Motor neuron (in vitro differentiated cells): ENCODE measurements at regions of chr15 and their contacts with region 1.

Region 1: DNA sequence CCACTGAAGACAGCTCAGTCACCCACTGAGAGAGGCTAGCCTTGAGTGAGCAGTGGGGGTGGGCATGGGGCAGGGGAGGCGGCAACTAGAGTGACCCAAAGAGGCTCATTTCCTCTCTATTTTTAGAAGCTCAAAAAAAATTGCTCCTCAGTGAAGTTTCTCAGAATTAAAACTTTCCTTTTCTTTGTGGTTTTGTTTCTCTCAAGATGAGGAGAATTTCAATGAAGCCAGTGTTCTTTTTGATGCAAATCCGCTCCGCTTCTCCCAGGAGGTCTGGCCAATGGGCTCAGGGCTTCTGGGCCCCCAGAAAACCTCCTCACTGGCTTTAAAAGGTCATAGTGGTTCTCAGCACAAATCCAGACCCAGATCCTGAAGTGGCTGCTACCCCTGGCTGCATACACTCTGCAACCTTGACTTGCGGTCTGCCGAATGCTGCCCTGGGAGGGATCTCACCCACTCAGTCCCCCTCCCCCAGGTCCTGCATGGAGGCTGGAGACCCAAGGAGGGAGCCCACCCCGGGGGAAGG is at the start of gene ACSBG1:
- ATAC-seq: peak in 5 of 8 experiments; percentile 55 to 64 (median 59)
- H3K4me3 ChIP-seq: no peak within 1 kb of the TSS
- H3K27ac ChIP-seq: no peak within 1 kb of the TSS
- H3K4me1 ChIP-seq: peaks cover 9 to 12% of the 10 kb centered on the region in 2 donors
- total RNA-seq, gene ACSBG1: 0.49 to 9.1 (median 1.9) TPM

Region 2: DNA sequence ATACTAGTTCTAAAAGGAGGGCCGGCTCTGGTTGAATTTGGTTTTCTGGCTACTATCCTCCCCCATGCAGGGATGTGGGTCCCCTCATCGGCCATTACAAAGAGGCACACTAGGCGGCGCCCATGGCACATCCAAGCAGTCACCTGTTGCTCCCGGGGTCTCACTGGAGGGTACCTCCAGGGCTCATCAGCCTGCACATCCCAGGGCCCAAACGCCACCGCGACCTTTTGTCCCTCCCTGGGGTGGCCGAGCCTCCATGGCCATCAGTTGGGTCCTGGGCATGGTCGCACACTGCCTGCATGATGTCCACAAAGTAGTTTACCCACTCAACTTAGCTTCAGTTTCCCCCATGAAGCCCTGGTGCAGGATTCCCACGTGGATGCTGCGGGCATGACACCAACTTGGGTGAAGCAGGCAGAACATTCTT is 57.1 kb before region 1 on chr15:
- in situ Hi-C with region 1: loop called in 1 of 9 experiments (anchors 10 kb)
- ATAC-seq: peak in 7 of 8 experiments; percentile 27 to 85 (median 55)
- H3K4me3 ChIP-seq: no peak overlapping the region
- H3K27ac ChIP-seq: no peak overlapping the region
- H3K4me1 ChIP-seq: no peaks in the 10 kb centered on the region